ENCODE measurements at regions of chr20 and their contacts with region 1.

Region 1: GRCh38 chr20:10521068-10521831 is 86.1 kb downstream of the SLX4IP start:
- DNase-seq: peak; percentile 82
- H3K4me3 ChIP-seq: no peak overlapping the region
- H3K27ac ChIP-seq: peak overlapping the region in 3 of 4 donors; percentile 75 to 86 (median 81)
- H3K4me1 ChIP-seq: peaks cover 0 to 62% (median 52%) of the 10 kb centered on the region in 4 donors
- H3K27me3 ChIP-seq: no peaks in the 10 kb centered on the region
- CTCF ChIP-seq: no peak
- EP300 ChIP-seq: peak; percentile 64 to 89 (median 83)
- POLR2A ChIP-seq: no peak

Region 2: GRCh38 chr20:10434467-10434831 is 86.8 kb before region 1 on chr20:
- intact Hi-C with region 1: no loop called
- DNase-seq: peak; percentile 98
- H3K4me3 ChIP-seq: peak overlapping the region; percentile 79 to 96 (median 91)
- H3K27ac ChIP-seq: peak overlapping the region; percentile 91 to 96 (median 94)
- H3K4me1 ChIP-seq: peaks cover 7 to 41% (median 20%) of the 10 kb centered on the region in 4 donors
- H3K27me3 ChIP-seq: no peaks in the 10 kb centered on the region
- CTCF ChIP-seq: no peak
- EP300 ChIP-seq: no peak
- POLR2A ChIP-seq: peak; percentile 97

Region 3: GRCh38 chr20:10508468-10509251 is 12.6 kb before region 1 on chr20:
- intact Hi-C with region 1: loop called (anchors 1 kb)
- DNase-seq: peak; percentile 82
- H3K4me3 ChIP-seq: no peak overlapping the region
- H3K27ac ChIP-seq: peak overlapping the region; percentile 53 to 87 (median 82)
- H3K4me1 ChIP-seq: peaks cover 0 to 81% (median 78%) of the 10 kb centered on the region in 4 donors
- H3K27me3 ChIP-seq: no peaks in the 10 kb centered on the region
- CTCF ChIP-seq: no peak
- EP300 ChIP-seq: no peak
- POLR2A ChIP-seq: no peak